Prostate gland (tissue), 2 donors: ENCODE measurements at regions of chr1 and their contacts with region 1.

Region 1: GRCh38 chr1:40709100-40709801 is 17.7 kb downstream of the NFYC start:
- DNase-seq: peak; percentile 95
- H3K4me3 ChIP-seq: peak overlapping the region; percentile 42 to 48
- H3K27ac ChIP-seq: peak overlapping the region; percentile 67 to 73
- H3K4me1 ChIP-seq: no peaks in the 10 kb centered on the region
- H3K27me3 ChIP-seq: no peaks in the 10 kb centered on the region
- CTCF ChIP-seq: no peak
- POLR2A ChIP-seq: peak; percentile 79

Region 2: DNA sequence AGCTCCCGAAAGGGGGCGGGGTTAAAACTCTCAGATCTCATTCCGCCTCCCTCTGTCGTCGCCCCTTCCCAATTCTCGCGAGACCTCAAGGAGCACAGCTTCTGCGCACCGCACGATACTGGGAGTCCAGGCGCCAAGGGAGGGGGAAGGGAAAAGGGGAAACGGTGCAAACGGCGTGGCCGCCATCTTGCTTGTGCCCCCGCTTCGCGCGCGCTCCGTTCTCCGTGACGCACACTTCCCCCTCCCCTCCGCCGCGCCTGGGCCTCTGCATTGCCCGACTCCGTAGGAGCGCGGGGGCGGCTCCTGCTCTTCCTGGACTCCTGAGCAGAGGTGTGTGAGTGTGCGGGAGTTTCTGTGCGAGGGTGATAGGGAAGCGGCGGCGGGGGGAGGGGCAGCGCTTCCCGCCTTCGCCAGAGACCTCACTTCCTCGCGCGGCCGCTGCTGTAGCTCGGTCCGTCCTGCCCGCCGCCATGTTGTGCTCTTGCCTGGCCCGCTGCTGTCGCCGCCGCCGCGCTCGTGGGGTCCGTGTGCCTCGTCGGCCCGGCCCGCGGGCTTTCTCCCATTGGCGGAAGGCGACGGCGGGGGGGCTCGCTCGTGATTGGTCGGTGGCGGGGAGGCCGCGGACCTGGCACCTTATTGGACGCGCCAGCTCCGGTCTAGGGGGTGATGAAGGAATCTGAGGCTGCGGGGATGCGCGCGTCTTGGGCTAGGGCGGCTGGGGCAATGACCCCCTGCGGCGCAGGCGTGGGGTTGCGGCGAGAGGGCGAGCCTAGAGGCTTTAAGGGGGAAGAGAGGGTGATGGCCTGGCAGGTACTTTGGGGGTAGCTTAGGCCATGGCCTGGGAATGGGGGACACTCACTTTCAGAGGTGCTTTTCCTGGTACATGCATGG is 17.5 kb before region 1 on chr1 and contains the start of gene NFYC:
- intact Hi-C with region 1: loop called (anchors 2 kb)
- DNase-seq: peak; percentile 94
- H3K4me3 ChIP-seq: peak within 1 kb of the TSS; percentile 75 to 96
- H3K27ac ChIP-seq: peak within 1 kb of the TSS; percentile 98 to 99
- H3K4me1 ChIP-seq: peaks cover 8% of the 10 kb centered on the region
- H3K27me3 ChIP-seq: no peaks in the 10 kb centered on the region
- CTCF ChIP-seq: peak in 2 of 4 experiments; percentile 8 to 32
- POLR2A ChIP-seq: peak; percentile 91
- total RNA-seq, gene NFYC: 54.9 to 93.8 TPM

Region 3: DNA sequence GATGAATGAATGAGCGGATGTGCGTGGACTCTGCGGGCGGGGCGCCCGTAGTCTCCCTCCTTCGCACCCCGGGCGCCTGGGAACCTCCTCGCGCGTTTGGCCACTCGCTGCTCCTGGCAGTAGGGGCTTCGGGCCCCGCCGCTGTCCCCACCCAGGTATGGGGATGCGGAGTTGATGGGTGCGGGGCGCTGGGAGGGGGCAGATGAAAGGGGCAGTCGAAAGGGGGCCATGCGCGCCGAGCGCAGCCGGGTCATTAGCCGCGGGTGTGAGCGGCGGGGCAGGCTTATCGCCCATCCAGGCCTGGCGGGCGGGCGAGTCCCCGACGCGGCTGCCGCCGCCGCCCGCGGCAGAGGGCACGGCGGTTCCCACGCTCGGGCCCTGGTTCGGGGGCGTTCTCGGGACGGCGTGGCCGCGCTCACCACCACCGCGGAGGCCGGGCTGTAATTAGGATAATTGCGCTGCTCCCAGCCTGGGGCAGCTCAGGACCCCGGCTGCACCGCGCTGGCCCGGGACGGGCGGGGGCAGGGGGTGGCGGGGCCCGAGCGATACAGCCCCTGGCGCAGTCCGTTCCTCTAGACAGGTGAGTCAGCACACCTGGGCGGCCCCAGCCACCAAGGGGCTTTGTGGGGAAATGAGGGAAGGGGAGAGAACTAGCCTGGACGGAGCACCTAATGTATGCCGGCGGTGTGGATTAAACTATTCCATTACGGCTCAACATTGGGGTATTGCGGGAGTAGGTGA is 175.0 kb after region 1 on chr1:
- intact Hi-C with region 1: no loop called
- DNase-seq: no peak
- H3K4me3 ChIP-seq: no peak overlapping the region
- H3K27ac ChIP-seq: no peak overlapping the region
- H3K4me1 ChIP-seq: no peaks in the 10 kb centered on the region
- H3K27me3 ChIP-seq: peaks cover 2% of the 10 kb centered on the region
- CTCF ChIP-seq: no peak
- POLR2A ChIP-seq: no peak